Cardiac septum (tissue), 1 donor: ENCODE measurements at regions of chr2 and their contacts with region 1.

Region 1: DNA sequence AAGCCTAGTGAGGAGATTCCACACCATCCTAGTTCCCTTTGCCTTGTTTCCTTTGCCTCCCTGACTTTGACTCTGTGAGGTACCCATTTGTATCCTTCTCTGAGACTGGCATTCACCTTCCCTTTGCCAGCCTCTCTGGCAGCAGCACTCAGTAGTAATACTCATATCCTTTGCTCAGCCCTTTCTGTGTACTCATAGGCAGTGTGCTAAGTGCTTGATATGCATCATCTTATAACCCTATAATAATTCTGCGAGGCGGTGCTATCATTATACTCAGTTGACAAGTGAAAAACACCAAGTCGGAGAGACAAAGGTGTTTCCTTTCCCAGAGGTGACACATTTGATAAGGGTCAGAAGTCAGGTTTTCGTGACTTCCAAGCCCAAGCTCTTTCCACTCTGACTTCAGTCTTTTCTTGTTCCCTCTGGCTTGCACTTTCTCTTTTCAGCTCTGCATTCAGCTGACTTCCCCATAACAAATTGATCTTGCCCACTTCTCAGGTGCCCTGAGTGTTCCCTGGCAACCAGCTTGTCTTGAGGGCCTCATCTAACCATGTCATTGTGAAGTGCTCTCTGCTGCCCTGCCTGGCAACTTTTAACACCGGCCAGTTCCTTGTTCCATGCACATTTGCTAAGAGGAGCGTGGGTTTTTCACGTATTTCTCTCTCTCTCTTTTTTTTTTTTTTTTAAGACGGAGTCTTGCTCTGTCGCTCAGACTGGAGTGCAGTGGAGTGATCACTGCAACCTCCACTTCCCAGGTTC is 94.5 kb upstream of the UPP2 start:
- DNase-seq: no peak

Region 2: DNA sequence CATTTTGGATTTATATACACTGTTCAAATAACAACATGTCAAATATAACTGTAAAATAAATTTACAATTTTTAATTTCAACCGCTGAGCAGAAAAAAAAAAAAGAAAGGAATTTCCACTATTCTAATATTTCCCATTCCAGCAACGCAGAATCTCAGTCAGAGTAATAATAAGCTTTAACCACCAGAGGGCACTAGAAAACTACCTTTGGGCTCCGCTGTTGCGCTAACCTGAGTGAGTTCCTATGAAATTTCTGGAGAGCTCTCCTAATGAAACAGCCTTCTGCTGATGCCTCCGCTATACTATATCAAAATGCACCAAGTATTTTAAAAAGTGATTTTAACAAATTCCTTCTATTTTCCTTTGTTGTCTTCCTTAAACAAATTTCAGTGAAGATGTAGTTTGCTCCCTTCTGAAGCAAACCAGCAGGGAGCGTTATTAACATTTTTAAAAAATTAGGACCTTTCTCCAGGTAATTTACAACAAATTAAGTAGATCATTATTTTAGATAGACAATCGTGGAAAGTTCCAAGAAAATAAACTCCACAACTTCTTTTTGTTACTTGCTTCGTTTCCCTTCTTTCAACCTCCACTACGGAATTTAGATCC is 704.5 kb before region 1 on chr2:
- intact Hi-C with region 1: loop called (anchors 10 kb)
- DNase-seq: no peak

Region 3: DNA sequence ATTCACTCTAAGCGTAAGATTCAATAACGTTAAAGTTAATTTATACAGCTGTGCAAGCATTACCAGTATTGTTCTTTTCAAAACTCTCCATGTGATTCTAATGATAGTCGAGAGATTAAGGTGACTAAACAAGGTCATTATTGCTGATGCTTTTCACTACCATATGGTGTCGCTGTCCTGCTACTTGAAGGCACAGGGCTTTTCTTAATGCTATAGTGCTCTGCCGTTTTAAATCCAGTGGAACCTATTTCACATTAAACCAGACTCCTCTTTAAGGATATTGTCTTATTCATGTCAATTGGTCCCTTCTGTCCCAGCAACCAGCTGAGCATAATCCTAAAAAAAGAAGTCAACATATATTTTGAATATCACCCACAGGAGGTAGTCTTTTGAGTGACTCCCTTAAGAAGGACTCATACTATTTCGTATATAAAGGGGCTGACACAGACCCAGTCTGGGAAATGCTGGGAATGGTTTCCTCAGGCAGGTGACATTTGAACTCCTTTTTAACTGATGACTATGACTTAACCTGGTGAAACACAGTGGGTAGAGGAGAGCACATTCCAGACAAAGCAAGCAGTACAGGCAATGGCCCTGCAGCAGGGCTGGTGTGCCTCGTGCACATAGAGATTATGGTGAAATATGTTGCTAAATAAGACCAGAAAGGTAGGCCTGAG is 509.4 kb before region 1 on chr2:
- intact Hi-C with region 1: loop called (anchors 5 kb)
- DNase-seq: no peak

Region 4: GRCh38 chr2:157777427-157777826 is 229.7 kb before region 1 on chr2:
- intact Hi-C with region 1: loop called (anchors 2 kb)
- DNase-seq: no peak

Region 5: DNA sequence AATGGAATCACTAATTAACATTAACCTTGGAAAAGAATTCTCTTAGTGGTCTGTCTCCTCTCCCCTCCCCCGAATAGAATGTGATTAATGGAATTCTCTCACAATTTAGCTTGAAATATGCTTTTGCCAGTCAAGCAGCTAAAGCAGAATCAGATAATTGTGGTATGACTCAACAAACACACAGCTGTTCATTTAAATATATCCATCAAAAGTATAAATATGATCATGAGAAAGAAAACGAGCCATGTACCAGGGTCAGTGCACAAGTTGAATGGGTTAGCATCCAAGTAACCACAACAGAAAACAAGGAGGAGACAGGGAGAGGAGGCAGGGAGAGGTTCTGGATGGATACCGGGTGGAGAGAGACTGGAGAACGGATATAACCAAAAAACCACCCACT is 197.9 kb before region 1 on chr2:
- intact Hi-C with region 1: no loop called
- DNase-seq: no peak

Region 6: GRCh38 chr2:157876066-157876787 is 130.9 kb before region 1 on chr2 and contains the start of gene ACVR1:
- intact Hi-C with region 1: loop called (anchors 10 kb)
- DNase-seq: peak; percentile 98
- total RNA-seq, gene ACVR1: 22.7 TPM